Activated CD4-positive, alpha-beta memory T cell treated with anti-CD3 and anti-CD28 coated beads for 36 hours (primary cell): ENCODE measurements at regions of chr6 and their contacts with region 1.

Region 1: DNA sequence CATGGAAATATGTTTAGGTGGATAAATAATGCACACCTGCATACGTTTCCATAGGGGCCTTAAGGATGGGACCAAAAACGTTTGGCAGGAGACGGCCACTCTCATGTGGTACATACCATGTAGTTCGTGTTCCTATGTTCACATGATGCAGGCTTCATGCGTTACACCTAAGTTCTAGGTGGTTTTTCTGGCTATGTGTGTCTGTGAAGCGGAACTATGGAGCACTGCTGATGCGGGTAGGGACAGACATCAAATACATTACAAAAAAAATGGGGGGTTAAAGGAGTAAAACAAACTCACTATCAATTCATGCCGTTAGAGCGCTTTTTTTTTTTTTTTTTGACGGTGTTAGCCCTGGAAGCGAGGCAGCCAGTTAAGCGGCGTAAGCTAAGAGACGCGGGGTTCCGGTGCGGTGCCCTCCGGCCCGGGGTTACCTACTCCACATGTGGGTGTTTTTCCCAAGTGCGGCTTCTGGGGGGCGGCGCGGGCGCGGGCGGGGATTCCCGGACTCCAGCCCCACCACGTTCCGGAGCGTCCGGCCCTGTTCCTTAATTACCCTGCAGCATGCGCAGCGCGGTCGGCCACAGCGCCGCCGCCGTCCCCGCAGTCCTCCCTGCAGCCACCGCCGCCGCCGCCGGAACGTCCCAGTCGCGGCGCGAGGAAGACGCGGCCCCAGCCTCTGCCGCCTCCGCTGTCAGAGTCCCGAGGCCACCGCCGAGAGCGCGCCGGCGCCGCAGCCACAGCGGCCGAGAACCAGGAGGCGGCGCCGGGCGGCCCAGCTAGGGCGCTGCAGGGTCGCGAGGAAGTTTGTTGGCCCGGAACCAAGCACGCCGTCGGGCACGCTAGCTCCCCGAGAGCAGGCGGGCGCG is 648 bp downstream of the COL19A1 start:
- DNase-seq: peak; percentile 69
- H3K4me3 Mint-ChIP-seq: peak overlapping the region; percentile 73
- H3K27ac Mint-ChIP-seq: no peak overlapping the region
- H3K4me1 Mint-ChIP-seq: peaks cover 27% of the 10 kb centered on the region
- H3K27me3 Mint-ChIP-seq: peaks cover 16% of the 10 kb centered on the region

Region 2: DNA sequence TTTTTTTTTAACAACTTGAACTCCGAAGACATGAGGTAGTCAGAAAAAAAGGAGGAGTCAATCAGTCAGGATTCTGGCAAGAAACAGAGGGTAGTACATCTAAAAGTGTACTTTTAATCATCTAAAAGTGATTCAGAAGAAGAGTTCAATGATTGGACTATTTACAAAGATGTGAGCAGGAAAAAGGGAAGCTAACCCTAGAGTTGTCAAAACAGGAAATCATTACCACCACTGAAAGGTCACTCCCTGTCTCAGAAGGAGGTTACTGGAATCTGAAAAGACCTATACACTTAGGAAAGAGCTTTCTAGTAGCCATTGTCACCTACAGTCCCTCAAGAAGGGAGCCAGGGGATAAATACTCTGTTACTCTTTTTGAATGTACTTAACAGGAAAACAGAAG is 53.5 kb before region 1 on chr6:
- CTCF ChIA-PET with region 1: no interaction called
- POLR2A ChIA-PET with region 1: no interaction called
- intact Hi-C with region 1: loop called (anchors 2 kb)
- DNase-seq: no peak
- H3K4me3 Mint-ChIP-seq: no peak overlapping the region
- H3K27ac Mint-ChIP-seq: peak overlapping the region; percentile 75
- H3K4me1 Mint-ChIP-seq: peaks cover 58% of the 10 kb centered on the region
- H3K27me3 Mint-ChIP-seq: no peaks in the 10 kb centered on the region

Region 3: GRCh38 chr6:69917834-69918233 is 50.8 kb after region 1 on chr6:
- CTCF ChIA-PET with region 1: no interaction called
- POLR2A ChIA-PET with region 1: no interaction called
- intact Hi-C with region 1: loop called (anchors 2 kb)
- DNase-seq: peak; percentile 53
- H3K4me3 Mint-ChIP-seq: no peak overlapping the region
- H3K27ac Mint-ChIP-seq: peak overlapping the region; percentile 26
- H3K4me1 Mint-ChIP-seq: peaks cover 9% of the 10 kb centered on the region
- H3K27me3 Mint-ChIP-seq: no peaks in the 10 kb centered on the region